A549 (cell line): ENCODE measurements at regions of chrX and their contacts with region 1.

Region 1: DNA sequence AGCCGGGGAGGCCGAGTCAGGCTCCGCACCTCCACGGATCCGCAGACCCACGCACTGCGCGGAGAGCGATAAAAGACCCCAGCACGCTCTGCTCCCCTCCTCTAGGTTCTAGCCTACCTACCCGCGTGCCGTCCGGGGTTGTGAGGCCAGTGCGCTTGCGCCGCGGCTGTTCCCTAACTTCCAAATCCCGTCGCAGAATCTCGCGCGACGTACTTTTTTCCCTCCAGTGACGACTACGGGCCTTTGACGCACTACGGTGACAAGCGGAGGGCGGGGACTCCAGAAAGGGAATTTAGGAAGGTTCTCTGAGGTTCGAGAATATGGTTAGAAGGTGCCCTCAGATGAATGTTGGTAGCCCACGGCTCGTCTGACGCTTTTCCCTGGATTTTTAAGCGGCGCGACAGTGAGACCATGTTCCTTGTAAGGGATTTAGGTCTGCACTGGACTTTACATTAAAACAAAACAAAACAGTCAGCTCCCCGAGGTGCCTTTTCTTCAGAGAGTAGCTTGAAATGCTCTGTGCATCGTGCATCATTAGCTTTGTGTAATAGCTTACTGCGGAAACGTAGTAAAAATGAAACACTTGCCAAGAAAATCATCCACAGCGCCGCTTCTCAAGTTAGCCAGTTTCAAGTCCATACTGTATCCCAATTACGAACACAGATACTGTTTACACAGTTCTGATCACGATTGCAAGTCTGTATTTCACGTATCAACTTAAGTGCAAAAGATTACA is at the start of gene NKRF:
- DNase-seq: peak; percentile 83 to 94
- ATAC-seq: peak; percentile 87 to 92
- H3K4me3 ChIP-seq: peak within 1 kb of the TSS; percentile 95
- H3K27ac ChIP-seq: peak within 1 kb of the TSS; percentile 95 to 99
- H3K4me1 ChIP-seq: peaks cover 7% of the 10 kb centered on the region; the same call in 2 of the 3 replicates
- CTCF ChIP-seq: no peak
- EP300 ChIP-seq: no peak
- POLR2A ChIP-seq: peak; percentile 82
- RAD21 ChIP-seq: no peak
- polyA plus RNA-seq, gene NKRF: 14.2 and 16.2 TPM in 2 replicates

Region 2: DNA sequence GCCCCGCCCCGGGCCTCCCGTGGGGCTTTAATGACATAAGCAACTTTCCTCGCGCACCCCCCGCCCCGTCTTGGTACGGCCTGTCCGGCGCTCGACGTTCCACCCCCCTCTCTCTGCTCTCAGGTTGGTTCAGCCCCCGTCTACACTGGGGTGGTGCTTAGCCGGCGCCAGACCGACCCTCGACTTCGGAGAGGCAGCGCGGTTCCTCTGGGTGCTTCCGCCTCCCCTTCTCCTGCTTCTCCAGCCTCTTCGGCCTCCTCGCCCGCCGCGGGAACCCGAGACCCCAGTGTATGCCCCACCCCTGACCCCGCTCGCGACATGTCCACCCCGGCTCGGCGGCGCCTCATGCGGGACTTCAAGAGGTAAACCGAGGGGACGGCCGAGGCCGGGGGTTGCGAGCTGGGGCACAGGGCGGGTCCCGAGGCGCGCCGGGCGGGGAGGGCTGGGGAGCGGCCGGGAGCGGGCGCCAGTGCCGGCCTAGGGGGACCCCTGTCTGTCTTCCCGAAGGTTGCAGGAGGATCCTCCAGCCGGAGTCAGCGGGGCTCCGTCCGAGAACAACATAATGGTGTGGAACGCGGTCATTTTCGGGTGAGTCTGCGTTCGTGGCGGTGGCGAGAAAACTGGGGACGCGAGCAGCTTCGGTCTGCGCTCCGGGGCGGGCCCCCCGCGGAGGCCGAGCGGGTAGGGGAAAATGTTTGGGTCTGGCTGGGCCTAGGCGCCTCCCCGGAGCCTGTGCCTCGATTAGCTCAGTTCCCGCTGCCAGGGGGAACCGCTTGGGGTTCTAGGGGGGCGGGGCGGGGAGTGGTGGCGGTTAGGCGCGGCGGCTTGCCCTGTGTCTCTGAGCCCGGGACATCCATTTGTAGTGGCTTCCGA is 31.8 kb before region 1 on chrX and contains the start of gene UBE2A:
- CTCF ChIA-PET with region 1: interaction called, 3 read pairs
- POLR2A ChIA-PET with region 1: interaction called, 17 read pairs
- DNase-seq: peak; percentile 85 to 95
- ATAC-seq: peak; percentile 93 to 94
- H3K4me3 ChIP-seq: peak within 1 kb of the TSS; percentile 88
- H3K27ac ChIP-seq: peak within 1 kb of the TSS; percentile 89 to 99
- H3K4me1 ChIP-seq: peaks cover 10% of the 10 kb centered on the region; the same call in 2 of the 3 replicates
- CTCF ChIP-seq: peak; percentile 22; the same call in 2 of the 3 replicates
- EP300 ChIP-seq: no peak
- POLR2A ChIP-seq: peak; percentile 95
- RAD21 ChIP-seq: peak; percentile 16 to 20; a peak in 2 of 5 replicates
- polyA plus RNA-seq, gene UBE2A: 109 and 113 TPM in 2 replicates